Activated CD4-positive, alpha-beta T cell treated with anti-CD3 and anti-CD28 coated beads for 36 hours (primary cell): ENCODE measurements at regions of chr3 and their contacts with region 1.

Region 1: GRCh38 chr3:32432711-32433530 is 41.3 kb downstream of the CMTM7 start:
- DNase-seq: peak; percentile 60
- ATAC-seq: peak; percentile 65
- H3K4me3 Mint-ChIP-seq: peak overlapping the region; percentile 72
- H3K27ac Mint-ChIP-seq: peak overlapping the region; percentile 99
- H3K4me1 Mint-ChIP-seq: peaks cover 85% of the 10 kb centered on the region
- H3K27me3 Mint-ChIP-seq: no peaks in the 10 kb centered on the region

Region 2: DNA sequence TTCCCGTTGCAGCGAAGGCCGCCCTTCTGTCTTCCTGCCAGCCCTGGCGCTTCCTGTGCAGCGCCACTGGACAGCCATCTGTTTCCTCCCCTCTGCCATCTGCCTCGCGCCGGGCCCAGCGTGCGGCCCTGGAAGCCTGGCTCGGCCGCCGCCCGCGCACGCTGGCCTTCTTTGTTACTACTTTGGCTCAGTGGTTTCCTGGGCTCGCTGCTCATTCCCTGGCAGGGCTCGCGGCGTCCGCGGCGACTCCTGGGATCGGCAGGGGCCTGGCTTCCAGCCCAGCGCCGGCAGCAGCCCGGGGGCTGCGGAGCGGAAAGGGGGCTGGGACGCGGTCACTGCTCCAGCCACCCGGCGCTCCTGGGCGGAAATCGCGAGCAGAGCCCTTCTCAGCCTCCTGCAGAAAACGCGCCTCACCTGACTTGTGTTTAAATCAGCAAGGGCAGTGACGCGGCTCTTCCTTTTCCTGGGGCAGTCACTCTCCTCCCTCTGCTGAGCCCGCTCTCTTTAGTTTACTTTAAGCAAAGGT is 31.3 kb before region 1 on chr3:
- CTCF ChIA-PET with region 1: interaction called, 4 read pairs
- POLR2A ChIA-PET with region 1: interaction called, 3 read pairs
- intact Hi-C with region 1: loop called in 1 of 2 experiments (anchors 1 kb)
- DNase-seq: peak; percentile 79
- ATAC-seq: peak; percentile 78
- H3K4me3 Mint-ChIP-seq: peak overlapping the region; percentile 90
- H3K27ac Mint-ChIP-seq: peak overlapping the region; percentile 100
- H3K4me1 Mint-ChIP-seq: peaks cover 71% of the 10 kb centered on the region
- H3K27me3 Mint-ChIP-seq: no peaks in the 10 kb centered on the region

Region 3: DNA sequence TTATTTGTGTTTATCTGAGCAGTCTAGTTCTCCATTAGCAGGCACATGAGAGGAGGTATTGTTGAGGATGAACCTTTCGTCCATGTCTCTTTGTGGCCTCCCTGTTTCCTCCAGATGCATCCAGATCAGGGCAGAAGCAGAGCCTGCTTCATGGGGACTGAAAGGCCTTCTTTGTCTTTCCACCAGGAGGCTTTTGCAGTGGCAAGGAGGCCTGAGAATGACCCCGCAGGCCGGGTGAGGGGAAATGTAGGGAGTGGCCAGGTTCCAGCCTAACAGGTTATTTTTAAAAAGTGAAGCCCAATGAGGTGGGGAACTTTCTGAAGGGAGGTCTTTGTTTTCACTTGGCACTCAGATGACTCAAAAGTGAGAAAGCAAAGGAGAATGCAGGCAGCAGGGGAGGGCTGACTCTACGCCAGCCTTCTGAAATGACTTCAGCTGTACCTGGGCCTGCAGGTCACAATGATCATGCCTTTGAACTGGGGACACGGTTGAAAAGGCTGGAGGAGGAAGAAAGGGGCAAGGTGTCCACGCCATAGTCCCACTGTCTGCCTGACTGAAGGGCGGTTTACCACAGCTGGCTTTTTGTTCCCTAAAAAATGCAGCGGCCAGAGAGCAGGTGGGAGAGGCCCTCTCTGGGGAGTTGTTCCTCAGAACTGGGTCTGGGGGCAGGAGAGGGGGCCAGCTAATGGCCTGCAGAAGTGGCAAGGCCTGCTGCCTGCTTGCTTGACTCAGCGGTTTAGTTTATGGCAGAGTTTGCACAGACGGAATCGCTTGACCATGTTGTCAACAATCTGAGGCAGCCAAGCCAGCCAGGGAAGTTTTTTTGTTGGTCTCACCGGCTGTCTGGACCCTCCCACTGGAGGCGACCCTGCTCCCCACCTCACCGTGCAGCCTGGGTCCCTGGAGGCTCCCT is 12.5 kb before region 1 on chr3:
- CTCF ChIA-PET with region 1: interaction called, 25 read pairs
- POLR2A ChIA-PET with region 1: interaction called, 5 read pairs
- intact Hi-C with region 1: loop called (anchors 1 to 2 kb)
- DNase-seq: peak; percentile 74
- ATAC-seq: peak; percentile 86
- H3K4me3 Mint-ChIP-seq: peak overlapping the region; percentile 23
- H3K27ac Mint-ChIP-seq: peak overlapping the region; percentile 90
- H3K4me1 Mint-ChIP-seq: peaks cover 95% of the 10 kb centered on the region
- H3K27me3 Mint-ChIP-seq: no peaks in the 10 kb centered on the region

Region 4: GRCh38 chr3:32460031-32460749 is 27.3 kb after region 1 on chr3:
- CTCF ChIA-PET with region 1: interaction called, 8 read pairs
- POLR2A ChIA-PET with region 1: no interaction called
- intact Hi-C with region 1: loop called in 1 of 2 experiments (anchors 2 kb)
- DNase-seq: peak; percentile 81
- ATAC-seq: peak; percentile 90
- H3K4me3 Mint-ChIP-seq: peak overlapping the region; percentile 56
- H3K27ac Mint-ChIP-seq: no peak overlapping the region
- H3K4me1 Mint-ChIP-seq: peaks cover 34% of the 10 kb centered on the region
- H3K27me3 Mint-ChIP-seq: no peaks in the 10 kb centered on the region

Region 5: DNA sequence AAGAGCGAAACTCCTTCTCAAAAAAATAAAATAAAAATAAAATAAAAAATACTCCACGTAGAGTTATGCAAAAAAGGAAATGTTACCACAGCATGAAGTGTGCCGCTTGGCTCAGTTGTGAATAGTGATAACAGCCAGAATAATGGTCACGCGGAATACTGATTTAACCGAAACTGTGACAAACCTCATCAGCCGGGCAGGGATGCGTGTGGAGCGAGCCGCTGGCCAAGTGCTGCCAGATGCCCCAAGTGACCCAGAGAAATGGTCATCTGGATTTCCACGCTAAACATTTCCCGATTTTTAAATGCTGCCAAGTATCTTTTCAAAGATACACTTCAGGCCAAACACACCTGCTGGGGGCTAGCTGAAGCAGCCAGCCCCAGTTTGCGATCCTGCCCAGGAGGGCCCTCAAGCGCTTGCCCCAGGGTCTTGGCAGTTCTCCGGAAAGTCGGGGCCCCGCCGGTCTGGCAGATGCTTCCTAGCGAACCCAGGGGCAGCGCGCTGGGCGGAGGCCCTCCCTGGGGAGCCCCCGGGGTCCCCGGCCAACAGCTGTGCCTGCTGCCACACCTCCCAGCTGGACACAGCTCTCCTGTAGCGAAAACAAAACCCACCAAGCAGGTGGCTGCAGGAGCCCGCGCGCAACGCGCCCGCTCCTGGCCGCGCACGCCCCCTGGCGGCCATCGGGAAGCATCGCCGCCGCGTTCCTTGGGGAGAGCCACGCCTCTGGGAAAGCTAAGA is 34.6 kb after region 1 on chr3:
- CTCF ChIA-PET with region 1: interaction called, 9 read pairs
- POLR2A ChIA-PET with region 1: no interaction called
- intact Hi-C with region 1: loop called in 1 of 2 experiments (anchors 2 kb)
- DNase-seq: peak; percentile 84
- ATAC-seq: peak; percentile 77
- H3K4me3 Mint-ChIP-seq: no peak overlapping the region
- H3K27ac Mint-ChIP-seq: no peak overlapping the region
- H3K4me1 Mint-ChIP-seq: peaks cover 45% of the 10 kb centered on the region
- H3K27me3 Mint-ChIP-seq: no peaks in the 10 kb centered on the region

Region 6: DNA sequence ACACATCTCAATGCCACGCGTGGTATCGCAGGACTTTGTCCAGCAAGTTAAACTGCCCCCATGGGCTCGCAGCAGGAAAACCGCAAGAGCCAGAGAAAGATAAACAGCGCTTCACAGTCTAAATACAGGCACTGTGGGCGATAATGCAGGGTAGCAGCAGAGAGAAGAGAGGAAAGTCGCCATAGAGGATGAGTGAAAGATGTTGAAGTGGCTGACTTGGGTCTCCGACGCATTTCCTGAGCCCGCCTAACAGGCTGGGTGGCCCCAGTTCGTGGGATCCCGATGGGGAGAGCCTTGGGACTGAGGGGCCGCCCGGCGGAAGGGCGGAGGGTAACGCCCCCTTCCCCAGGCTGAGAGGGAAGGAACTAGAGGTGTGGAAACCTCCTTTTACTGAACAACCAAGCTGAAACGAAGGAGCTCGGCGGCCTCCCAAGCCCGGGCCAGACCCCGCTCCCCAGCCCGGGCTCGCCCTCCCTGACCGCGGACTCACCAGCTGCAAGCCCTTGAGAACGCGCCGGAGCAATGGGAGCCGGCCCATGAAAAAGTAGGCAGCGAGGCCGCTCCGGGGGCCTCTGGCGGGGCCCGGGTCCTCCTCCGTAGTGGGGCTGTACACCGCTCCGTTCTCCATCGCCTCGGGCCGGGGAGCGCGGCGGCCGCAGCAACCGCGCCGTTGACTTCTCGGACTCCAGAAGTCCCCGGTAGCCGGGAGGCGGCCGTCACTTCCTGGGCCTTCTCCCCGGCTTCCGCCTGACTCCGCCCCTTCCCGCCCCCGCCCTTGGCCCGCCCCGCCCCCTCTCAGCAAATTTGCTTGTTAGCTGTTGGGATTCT is 69.4 kb after region 1 on chr3 and contains the start of gene CMTM6:
- CTCF ChIA-PET with region 1: no interaction called
- POLR2A ChIA-PET with region 1: no interaction called
- intact Hi-C with region 1: loop called in 1 of 2 experiments (anchors 2 kb)
- DNase-seq: peak; percentile 87
- ATAC-seq: peak; percentile 80
- H3K4me3 Mint-ChIP-seq: peak within 1 kb of the TSS; percentile 86
- H3K27ac Mint-ChIP-seq: peak within 1 kb of the TSS; percentile 95
- H3K4me1 Mint-ChIP-seq: peaks cover 29% of the 10 kb centered on the region
- H3K27me3 Mint-ChIP-seq: no peaks in the 10 kb centered on the region
- total RNA-seq, gene CMTM6: 33.6 to 48.0 TPM